Panc1 (cell line): ENCODE measurements at regions of chr11 and their contacts with region 1.

Region 1: DNA sequence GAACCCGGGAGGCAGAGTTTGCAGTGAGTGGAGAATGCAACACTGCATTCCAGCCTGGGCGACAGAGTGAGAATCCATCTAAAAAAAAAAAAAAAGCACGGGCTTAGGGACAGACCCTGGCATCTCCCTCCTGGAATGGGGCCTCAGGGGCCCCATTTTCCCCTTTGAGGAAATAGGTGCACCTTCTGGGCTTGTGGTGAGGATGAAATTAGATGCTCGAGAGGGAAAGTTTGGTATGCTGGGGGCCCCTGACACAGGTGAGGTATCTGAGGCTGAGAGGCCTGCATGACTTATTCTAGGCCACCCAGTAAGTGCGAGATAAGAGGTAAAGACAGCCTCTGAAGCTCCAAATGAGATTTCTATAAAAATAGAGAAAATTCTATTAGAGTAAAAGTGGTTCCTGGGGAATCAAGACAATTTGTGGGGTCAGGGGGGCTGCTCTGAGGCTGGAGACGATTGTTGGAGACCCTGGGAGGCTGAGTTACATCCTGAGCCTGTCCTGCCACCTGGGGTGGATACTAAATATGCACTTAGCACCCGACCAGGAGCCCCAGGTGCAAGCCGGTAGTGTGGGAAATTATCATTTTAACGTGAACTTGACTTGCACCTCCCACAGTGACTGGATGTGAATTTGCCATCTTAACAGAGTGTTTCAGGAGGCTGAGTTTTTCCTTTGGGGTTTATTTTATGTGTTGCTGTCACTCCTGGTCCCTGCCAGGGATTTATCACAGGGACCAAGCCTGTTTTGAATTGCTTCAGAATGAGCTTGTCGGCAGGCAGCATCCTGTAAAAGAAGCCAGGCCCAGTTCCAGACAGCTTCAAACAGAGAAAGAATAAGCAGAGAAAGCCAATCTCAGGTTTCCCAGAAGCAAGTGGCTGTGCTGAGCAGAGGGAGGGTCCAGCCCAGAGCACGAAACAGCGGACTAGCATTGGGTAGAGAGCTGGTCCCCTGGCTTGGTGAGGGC is 48.4 kb upstream of the TSKU start:
- DNase-seq: no peak
- ATAC-seq: 0 out of 2 replicates have a peak, but pooled peaks have one; percentile 5
- H3K4me3 ChIP-seq: no peak overlapping the region
- H3K27ac ChIP-seq: no peak overlapping the region
- H3K4me1 ChIP-seq: no peaks in the 10 kb centered on the region
- H3K27me3 ChIP-seq: no peaks in the 10 kb centered on the region
- CTCF ChIP-seq: no peak

Region 2: DNA sequence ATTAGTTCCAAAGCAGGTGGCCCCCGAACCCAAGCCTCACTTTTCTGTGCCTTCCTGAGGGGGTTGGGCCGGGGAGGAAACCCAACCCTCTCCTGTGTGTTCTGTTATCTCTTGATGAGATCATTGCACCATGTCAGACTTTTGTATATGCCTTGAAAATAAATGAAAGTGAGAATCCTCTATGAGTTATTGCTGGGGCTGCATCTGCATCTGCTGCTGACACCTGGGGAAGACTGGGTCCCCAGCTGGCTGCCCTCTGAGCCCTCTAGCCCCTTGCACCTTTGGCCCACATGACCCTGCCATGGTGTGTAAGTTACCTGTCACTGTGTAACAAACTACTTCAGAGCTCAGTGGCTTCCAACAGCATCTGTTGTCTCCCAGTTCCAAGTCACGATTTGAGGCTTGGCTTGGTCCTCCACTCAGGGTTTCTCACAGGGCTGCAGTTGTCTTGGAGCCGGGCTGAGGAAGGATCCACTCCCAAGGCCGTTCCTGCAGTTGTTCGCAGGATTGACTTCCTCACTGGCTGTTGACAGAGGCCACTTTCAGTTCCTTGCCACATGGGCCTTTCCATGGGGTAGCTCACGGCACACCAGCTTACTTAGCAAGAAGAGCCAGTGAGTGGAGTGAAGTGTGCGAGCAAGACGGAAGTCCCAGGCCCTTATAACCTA is 933.2 kb before region 1 on chr11:
- CTCF ChIA-PET with region 1: no interaction called
- POLR2A ChIA-PET with region 1: no interaction called
- in situ Hi-C with region 1: no loop called
- intact Hi-C with region 1: no loop called
- DNase-seq: no peak
- ATAC-seq: no peak
- H3K4me3 ChIP-seq: no peak overlapping the region
- H3K27ac ChIP-seq: no peak overlapping the region
- H3K4me1 ChIP-seq: no peaks in the 10 kb centered on the region
- H3K27me3 ChIP-seq: no peaks in the 10 kb centered on the region
- CTCF ChIP-seq: no peak

Region 3: GRCh38 chr11:76799066-76799804 is 64.5 kb after region 1 on chr11:
- CTCF ChIA-PET with region 1: interaction called, 43 read pairs
- POLR2A ChIA-PET with region 1: no interaction called
- in situ Hi-C with region 1: no loop called
- intact Hi-C with region 1: loop called (anchors 1 kb)
- DNase-seq: no peak
- ATAC-seq: peak; percentile 93
- H3K4me3 ChIP-seq: peak overlapping the region; percentile 15; a peak in 3 of 4 replicates
- H3K27ac ChIP-seq: 0 out of 2 replicates have a peak overlapping the region, but pooled peaks have one; percentile 23
- H3K4me1 ChIP-seq: peaks cover 6% of the 10 kb centered on the region
- H3K27me3 ChIP-seq: no peaks in the 10 kb centered on the region
- CTCF ChIP-seq: peak; percentile 98

Region 4: GRCh38 chr11:76807206-76807875 is 72.6 kb after region 1 on chr11:
- CTCF ChIA-PET with region 1: no interaction called
- POLR2A ChIA-PET with region 1: no interaction called
- in situ Hi-C with region 1: no loop called
- intact Hi-C with region 1: loop called (anchors 2 kb)
- DNase-seq: peak; percentile 47
- ATAC-seq: peak; percentile 96
- H3K4me3 ChIP-seq: peak overlapping the region in 1 of 2 experiments; percentile 29; a peak in 2 of 4 replicates
- H3K27ac ChIP-seq: no peak overlapping the region
- H3K4me1 ChIP-seq: 0 out of 2 replicates have a peak, but pooled peaks cover 4% of the 10 kb centered on the region
- H3K27me3 ChIP-seq: no peaks in the 10 kb centered on the region
- CTCF ChIP-seq: peak; percentile 95

Region 5: GRCh38 chr11:77039491-77040400 is 305.0 kb after region 1 on chr11:
- CTCF ChIA-PET with region 1: no interaction called
- POLR2A ChIA-PET with region 1: no interaction called
- in situ Hi-C with region 1: no loop called
- intact Hi-C with region 1: loop called (anchors 5 kb)
- DNase-seq: no peak
- ATAC-seq: peak; percentile 75
- H3K4me3 ChIP-seq: peak overlapping the region; percentile 43 to 59
- H3K27ac ChIP-seq: peak overlapping the region; percentile 18; the same call in 1 of the 2 replicates
- H3K4me1 ChIP-seq: peaks cover 28% of the 10 kb centered on the region
- H3K27me3 ChIP-seq: no peaks in the 10 kb centered on the region
- CTCF ChIP-seq: peak; percentile 92

Region 6: GRCh38 chr11:77340501-77340900 is 605.8 kb after region 1 on chr11:
- CTCF ChIA-PET with region 1: no interaction called
- POLR2A ChIA-PET with region 1: no interaction called
- in situ Hi-C with region 1: no loop called
- intact Hi-C with region 1: no loop called
- DNase-seq: no peak
- ATAC-seq: no peak
- H3K4me3 ChIP-seq: no peak overlapping the region
- H3K27ac ChIP-seq: no peak overlapping the region
- H3K4me1 ChIP-seq: no peaks in the 10 kb centered on the region
- H3K27me3 ChIP-seq: no peaks in the 10 kb centered on the region
- CTCF ChIP-seq: no peak